ENCODE measurements at regions of chr2 and their contacts with region 1.

Region 1: DNA sequence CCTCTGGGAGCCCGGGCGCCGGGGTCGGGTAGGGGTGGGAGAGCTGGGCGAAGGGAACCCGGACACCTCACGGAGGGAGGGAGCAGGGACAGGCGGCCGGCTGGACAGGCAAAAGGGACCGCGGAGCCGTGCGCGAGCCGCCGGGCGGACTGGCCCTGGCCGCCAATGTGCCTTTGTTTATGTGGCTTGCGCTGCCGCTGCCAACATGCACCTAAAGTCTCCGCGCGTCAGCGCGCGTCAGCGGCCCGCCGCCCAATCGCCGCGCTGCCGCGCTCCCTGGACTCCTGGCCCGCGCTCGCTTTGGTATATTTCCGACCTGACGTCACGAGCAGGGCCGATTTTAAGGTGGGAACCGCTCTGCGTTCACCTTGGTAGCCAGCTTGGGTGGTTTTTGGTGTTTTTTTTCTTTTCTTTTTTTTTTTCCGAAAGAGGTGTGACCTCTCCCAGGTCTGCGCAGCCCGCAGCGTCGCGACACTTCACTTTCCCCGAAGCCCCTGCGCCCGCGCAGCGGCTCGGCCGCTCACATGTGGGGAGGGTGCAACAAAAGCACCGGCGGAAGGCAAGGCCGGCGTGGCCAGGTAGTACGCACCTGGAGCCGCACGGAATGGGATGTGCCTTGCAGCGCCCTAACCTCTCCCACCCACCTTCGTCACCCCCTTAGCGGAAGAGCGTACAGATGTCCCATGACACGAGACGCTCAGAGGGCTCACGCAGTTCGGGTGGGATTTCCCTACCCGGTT is at the start of gene NR4A2:
- DNase-seq: peak; percentile 94
- H3K4me3 Mint-ChIP-seq: peak within 1 kb of the TSS; percentile 87
- H3K27ac Mint-ChIP-seq: peak within 1 kb of the TSS; percentile 99
- H3K4me1 Mint-ChIP-seq: peaks cover 12% of the 10 kb centered on the region
- H3K27me3 Mint-ChIP-seq: no peaks in the 10 kb centered on the region
- CTCF ChIP-seq: no peak
- total RNA-seq, gene NR4A2: 1.4 and 2.6 TPM in 2 replicates

Region 2: GRCh38 chr2:155377266-155377680 is 955.4 kb before region 1 on chr2:
- CTCF ChIA-PET with region 1: interaction called, 20 read pairs
- POLR2A ChIA-PET with region 1: interaction called, 5 read pairs
- intact Hi-C with region 1: loop called (anchors 2 kb)
- DNase-seq: peak; percentile 47
- H3K4me3 Mint-ChIP-seq: no peak overlapping the region
- H3K27ac Mint-ChIP-seq: no peak overlapping the region
- H3K4me1 Mint-ChIP-seq: no peaks in the 10 kb centered on the region
- H3K27me3 Mint-ChIP-seq: no peaks in the 10 kb centered on the region
- CTCF ChIP-seq: peak; percentile 41

Region 3: GRCh38 chr2:156182141-156182540 is 150.6 kb before region 1 on chr2:
- CTCF ChIA-PET with region 1: no interaction called
- POLR2A ChIA-PET with region 1: interaction called, 12 read pairs
- intact Hi-C with region 1: no loop called
- DNase-seq: peak; percentile 84
- H3K4me3 Mint-ChIP-seq: no peak overlapping the region
- H3K27ac Mint-ChIP-seq: peak overlapping the region; percentile 29
- H3K4me1 Mint-ChIP-seq: peaks cover 10% of the 10 kb centered on the region
- H3K27me3 Mint-ChIP-seq: no peaks in the 10 kb centered on the region
- CTCF ChIP-seq: no peak

Region 4: GRCh38 chr2:156400706-156401678 is 68.3 kb after region 1 on chr2:
- CTCF ChIA-PET with region 1: interaction called, 31 read pairs
- POLR2A ChIA-PET with region 1: interaction called, 62 read pairs
- intact Hi-C with region 1: loop called (anchors 1 kb)
- DNase-seq: peak; percentile 78
- H3K4me3 Mint-ChIP-seq: peak overlapping the region; percentile 78
- H3K27ac Mint-ChIP-seq: peak overlapping the region; percentile 96
- H3K4me1 Mint-ChIP-seq: peaks cover 26% of the 10 kb centered on the region
- H3K27me3 Mint-ChIP-seq: no peaks in the 10 kb centered on the region
- CTCF ChIP-seq: no peak

Region 5: GRCh38 chr2:156581280-156581679 is 248.6 kb after region 1 on chr2:
- CTCF ChIA-PET with region 1: interaction called, 21 read pairs
- POLR2A ChIA-PET with region 1: interaction called, 3 read pairs
- intact Hi-C with region 1: no loop called
- DNase-seq: no peak
- H3K4me3 Mint-ChIP-seq: no peak overlapping the region
- H3K27ac Mint-ChIP-seq: no peak overlapping the region
- H3K4me1 Mint-ChIP-seq: no peaks in the 10 kb centered on the region
- H3K27me3 Mint-ChIP-seq: no peaks in the 10 kb centered on the region
- CTCF ChIP-seq: no peak

Region 6: GRCh38 chr2:156892467-156893281 is 560.0 kb after region 1 on chr2:
- CTCF ChIA-PET with region 1: interaction called, 13 read pairs
- POLR2A ChIA-PET with region 1: interaction called, 18 read pairs
- intact Hi-C with region 1: loop called (anchors 1 kb)
- DNase-seq: peak; percentile 80
- H3K4me3 Mint-ChIP-seq: peak overlapping the region; percentile 69
- H3K27ac Mint-ChIP-seq: peak overlapping the region; percentile 6
- H3K4me1 Mint-ChIP-seq: peaks cover 20% of the 10 kb centered on the region
- H3K27me3 Mint-ChIP-seq: no peaks in the 10 kb centered on the region
- CTCF ChIP-seq: peak; percentile 39

Region 7: GRCh38 chr2:157182834-157183396 is 850.2 kb after region 1 on chr2:
- CTCF ChIA-PET with region 1: interaction called, 3 read pairs
- POLR2A ChIA-PET with region 1: no interaction called
- intact Hi-C with region 1: loop called (anchors 2 kb)
- DNase-seq: peak; percentile 91
- H3K4me3 Mint-ChIP-seq: peak overlapping the region; percentile 29
- H3K27ac Mint-ChIP-seq: peak overlapping the region; percentile 92
- H3K4me1 Mint-ChIP-seq: peaks cover 19% of the 10 kb centered on the region
- H3K27me3 Mint-ChIP-seq: no peaks in the 10 kb centered on the region
- CTCF ChIP-seq: no peak